ENCODE measurements at regions of chr4 and their contacts with region 1.

Region 1: GRCh38 chr4:185343726-185344581 is 51.8 kb downstream of the LRP2BP start:
- DNase-seq: no peak
- ATAC-seq: peak; percentile 48
- H3K4me3 ChIP-seq: no peak overlapping the region
- H3K27ac ChIP-seq: peak overlapping the region; percentile 97
- H3K4me1 ChIP-seq: peaks cover 65% of the 10 kb centered on the region
- H3K27me3 ChIP-seq: no peaks in the 10 kb centered on the region
- CTCF ChIP-seq: no peak
- EP300 ChIP-seq: peak; percentile 26 to 51; a peak in 1 of 4 replicates
- POLR2A ChIP-seq: peak; percentile 49; the same call in 1 of the 2 replicates
- RAD21 ChIP-seq: no peak

Region 2: DNA sequence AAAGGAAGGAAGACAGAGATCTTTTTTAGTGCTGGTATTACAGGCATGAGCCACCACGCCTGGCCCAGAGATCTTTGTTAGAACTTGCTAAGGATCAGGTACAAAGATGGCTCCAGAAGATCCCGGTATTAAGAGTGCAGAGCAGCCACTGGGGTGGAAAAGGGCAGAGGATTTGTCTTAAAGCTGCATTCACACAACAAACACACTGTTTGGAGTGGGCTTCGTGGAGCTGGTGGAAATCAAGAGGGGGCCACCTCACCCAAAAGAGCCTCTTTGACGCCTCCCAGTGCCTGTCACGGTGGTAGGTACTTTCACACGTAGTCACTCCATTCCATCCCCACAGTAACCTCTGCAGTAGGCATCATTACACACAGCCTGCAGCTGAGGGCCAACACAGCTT is 312.3 kb before region 1 on chr4:
- CTCF ChIA-PET with region 1: no interaction called
- POLR2A ChIA-PET with region 1: no interaction called
- RAD21 ChIA-PET with region 1: no interaction called
- SMC1A ChIA-PET with region 1: no interaction called
- in situ Hi-C with region 1: no loop called
- intact Hi-C with region 1: no loop called
- DNase-seq: no peak
- ATAC-seq: no peak
- H3K4me3 ChIP-seq: no peak overlapping the region
- H3K27ac ChIP-seq: no peak overlapping the region
- H3K4me1 ChIP-seq: no peaks in the 10 kb centered on the region
- H3K27me3 ChIP-seq: peaks cover 0 to 2% of the 10 kb centered on the region in 2 experiments; a peak in 2 of 4 replicates
- CTCF ChIP-seq: no peak
- EP300 ChIP-seq: no peak
- POLR2A ChIP-seq: no peak
- RAD21 ChIP-seq: no peak

Region 3: DNA sequence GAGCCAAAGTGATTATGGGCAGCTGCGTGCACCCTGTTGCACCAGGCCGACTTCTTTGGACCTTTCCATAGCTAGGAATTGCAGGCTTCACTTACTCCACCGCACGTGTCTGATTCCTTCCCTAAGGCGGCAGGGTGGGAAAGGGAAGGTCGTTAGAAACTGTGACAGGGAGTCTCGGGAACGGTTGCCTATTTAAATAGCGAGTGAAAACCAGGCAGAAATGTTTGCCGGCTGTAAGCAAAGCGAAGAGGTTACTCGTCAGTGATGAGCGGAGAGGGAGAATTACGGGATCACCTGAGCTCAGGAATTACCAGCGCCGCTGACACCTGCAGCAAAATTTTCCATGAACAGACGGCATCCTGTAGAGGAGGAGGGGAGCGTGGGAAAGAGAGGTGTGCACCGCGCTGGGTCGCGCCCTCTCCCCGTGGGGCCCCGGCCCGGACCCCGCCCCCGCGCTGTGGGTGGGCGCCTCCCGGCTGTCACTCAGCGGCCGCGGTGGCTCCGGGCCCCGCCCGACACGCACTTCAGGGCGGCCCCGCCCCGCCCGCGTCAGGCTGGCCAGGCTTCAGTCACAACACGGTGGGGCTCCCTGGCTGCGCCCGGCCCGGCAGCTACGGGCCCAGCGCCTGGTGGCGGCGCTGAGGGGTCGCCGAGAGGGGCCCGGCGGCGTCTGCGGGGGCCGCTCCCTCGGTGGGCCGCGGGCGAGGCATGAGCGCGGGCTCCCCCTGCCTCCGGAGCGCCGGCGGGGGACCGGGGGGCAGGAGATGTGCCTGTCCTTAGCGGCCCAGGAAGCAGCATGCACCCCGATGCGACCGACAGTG is 134.7 kb before region 1 on chr4 and contains the start of gene SNX25:
- CTCF ChIA-PET with region 1: interaction called, 7 read pairs
- POLR2A ChIA-PET with region 1: interaction called, 3 read pairs
- RAD21 ChIA-PET with region 1: interaction called, 11 read pairs
- SMC1A ChIA-PET with region 1: interaction called, 4 read pairs
- in situ Hi-C with region 1: no loop called
- intact Hi-C with region 1: no loop called
- DNase-seq: no peak
- ATAC-seq: peak; percentile 80
- H3K4me3 ChIP-seq: peak within 1 kb of the TSS; percentile 100
- H3K27ac ChIP-seq: peak within 1 kb of the TSS; percentile 84
- H3K4me1 ChIP-seq: peaks cover 28% of the 10 kb centered on the region
- H3K27me3 ChIP-seq: no peaks in the 10 kb centered on the region
- CTCF ChIP-seq: peak in 2 of 3 experiments; percentile 9 to 27; a peak in 1 of 6 replicates
- EP300 ChIP-seq: no peak
- POLR2A ChIP-seq: peak; percentile 85
- RAD21 ChIP-seq: peak; percentile 41; the same call in 1 of the 2 replicates
- polyA plus RNA-seq, gene SNX25: 19.6 to 27.8 TPM

Region 4: DNA sequence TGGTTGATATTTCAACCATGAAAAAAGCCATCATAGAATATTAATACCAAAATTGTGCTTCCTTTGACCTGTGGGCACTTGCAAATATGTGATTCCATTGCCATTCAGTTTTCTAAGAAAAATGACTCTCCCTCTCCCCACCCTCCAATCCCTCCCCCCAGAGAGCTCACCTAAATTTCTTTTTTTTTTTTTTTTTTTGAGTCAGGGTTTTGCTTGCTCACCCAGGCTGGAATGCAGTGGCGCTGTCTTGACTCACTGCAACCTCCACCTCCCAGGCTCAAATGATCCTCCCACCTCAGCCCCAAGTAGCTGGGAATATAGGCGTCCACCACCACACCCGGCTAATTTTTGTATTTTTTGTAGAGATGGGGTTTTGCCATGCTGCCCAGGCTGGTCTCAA is 87.5 kb before region 1 on chr4:
- CTCF ChIA-PET with region 1: no interaction called
- POLR2A ChIA-PET with region 1: no interaction called
- RAD21 ChIA-PET with region 1: no interaction called
- SMC1A ChIA-PET with region 1: no interaction called
- in situ Hi-C with region 1: no loop called
- intact Hi-C with region 1: no loop called
- DNase-seq: no peak
- ATAC-seq: no peak
- H3K4me3 ChIP-seq: no peak overlapping the region
- H3K27ac ChIP-seq: peak overlapping the region; percentile 38; the same call in 1 of the 2 replicates
- H3K4me1 ChIP-seq: peaks cover 34% of the 10 kb centered on the region
- H3K27me3 ChIP-seq: no peaks in the 10 kb centered on the region
- CTCF ChIP-seq: no peak
- EP300 ChIP-seq: no peak
- POLR2A ChIP-seq: no peak
- RAD21 ChIP-seq: no peak

Region 5: GRCh38 chr4:185332575-185333464 is 11.1 kb before region 1 on chr4:
- CTCF ChIA-PET with region 1: interaction called, 3 read pairs
- POLR2A ChIA-PET with region 1: interaction called, 8 read pairs
- RAD21 ChIA-PET with region 1: interaction called, 4 read pairs
- SMC1A ChIA-PET with region 1: interaction called, 27 read pairs
- in situ Hi-C with region 1: no loop called
- intact Hi-C with region 1: no loop called
- DNase-seq: peak; percentile 79
- ATAC-seq: peak; percentile 94
- H3K4me3 ChIP-seq: no peak overlapping the region
- H3K27ac ChIP-seq: peak overlapping the region; percentile 89
- H3K4me1 ChIP-seq: peaks cover 56% of the 10 kb centered on the region
- H3K27me3 ChIP-seq: no peaks in the 10 kb centered on the region
- CTCF ChIP-seq: no peak
- EP300 ChIP-seq: peak; percentile 51 to 55; a peak in 3 of 4 replicates
- POLR2A ChIP-seq: no peak
- RAD21 ChIP-seq: no peak

Region 6: DNA sequence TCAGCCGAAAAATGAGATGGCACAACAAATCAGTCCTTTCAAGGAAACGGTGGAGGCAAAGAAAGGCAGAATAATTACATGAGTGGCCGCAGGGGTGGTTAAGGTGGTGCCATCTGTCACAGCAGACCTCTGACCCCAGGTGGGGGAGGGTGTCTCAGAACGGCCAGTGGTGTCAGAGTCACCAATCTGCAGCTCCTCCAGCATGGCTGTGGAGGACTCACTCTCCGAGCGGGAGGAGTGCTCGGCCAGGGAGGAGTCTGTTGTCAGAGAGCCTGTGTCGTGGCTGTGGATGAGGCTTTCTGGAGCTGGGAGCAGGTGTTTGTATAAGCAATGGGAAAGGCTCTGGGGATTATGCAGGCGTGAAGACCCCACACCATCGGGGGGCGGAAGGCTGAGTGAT is 321.7 kb after region 1 on chr4:
- CTCF ChIA-PET with region 1: no interaction called
- POLR2A ChIA-PET with region 1: no interaction called
- RAD21 ChIA-PET with region 1: no interaction called
- SMC1A ChIA-PET with region 1: no interaction called
- in situ Hi-C with region 1: no loop called
- intact Hi-C with region 1: no loop called
- DNase-seq: no peak
- ATAC-seq: no peak
- H3K4me3 ChIP-seq: no peak overlapping the region
- H3K27ac ChIP-seq: no peak overlapping the region
- H3K4me1 ChIP-seq: no peaks in the 10 kb centered on the region
- H3K27me3 ChIP-seq: no peaks in the 10 kb centered on the region
- CTCF ChIP-seq: no peak
- EP300 ChIP-seq: no peak
- POLR2A ChIP-seq: no peak
- RAD21 ChIP-seq: no peak

Measured in GM12878 (cell line).